ENCODE measurements at regions of chr7 and their contacts with region 1.

Region 1: GRCh38 chr7:114922016-114922651 is at the start of gene MDFIC:
- DNase-seq: peak; percentile 54 to 77
- ATAC-seq: peak; percentile 86 to 97 (median 90)
- H3K4me3 ChIP-seq: peak within 1 kb of the TSS; percentile 43 to 91 (median 86)
- H3K27ac ChIP-seq: peak within 1 kb of the TSS; percentile 79 to 97 (median 90)
- H3K4me1 ChIP-seq: peaks cover 0 to 43% (median 27%) of the 10 kb centered on the region in 9 donors
- H3K27me3 ChIP-seq: no peaks in the 10 kb centered on the region
- CTCF ChIP-seq: peak in 4 of 9 donors; percentile 9 to 36 (median 20)
- total RNA-seq, gene MDFIC: 12.1 to 55.7 (median 34.1) TPM

Region 2: DNA sequence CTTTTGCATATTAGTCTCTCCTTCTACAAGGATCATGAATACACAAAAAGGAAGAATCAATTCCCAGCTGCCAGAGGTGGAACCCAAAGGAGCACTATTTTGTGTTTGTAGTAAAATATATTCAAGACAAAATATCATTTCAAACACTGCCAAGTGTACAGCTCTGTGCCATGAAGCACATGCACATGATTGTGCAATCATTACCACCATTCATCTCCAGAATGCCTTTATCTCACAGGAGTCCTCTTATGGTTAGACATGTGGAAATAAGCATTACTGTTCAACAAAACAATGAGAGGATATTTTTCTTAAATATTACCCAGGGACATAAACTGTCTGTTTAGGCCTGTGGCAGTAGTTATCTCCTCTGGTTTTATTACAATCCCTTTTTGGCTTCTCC is 851.9 kb before region 1 on chr7:
- intact Hi-C with region 1: no loop called
- DNase-seq: no peak
- ATAC-seq: no peak
- H3K4me3 ChIP-seq: no peak overlapping the region
- H3K27ac ChIP-seq: no peak overlapping the region
- H3K4me1 ChIP-seq: no peaks in the 10 kb centered on the region
- H3K27me3 ChIP-seq: peaks cover 0 to 4% (median 0%) of the 10 kb centered on the region in 7 donors
- CTCF ChIP-seq: no peak

Region 3: DNA sequence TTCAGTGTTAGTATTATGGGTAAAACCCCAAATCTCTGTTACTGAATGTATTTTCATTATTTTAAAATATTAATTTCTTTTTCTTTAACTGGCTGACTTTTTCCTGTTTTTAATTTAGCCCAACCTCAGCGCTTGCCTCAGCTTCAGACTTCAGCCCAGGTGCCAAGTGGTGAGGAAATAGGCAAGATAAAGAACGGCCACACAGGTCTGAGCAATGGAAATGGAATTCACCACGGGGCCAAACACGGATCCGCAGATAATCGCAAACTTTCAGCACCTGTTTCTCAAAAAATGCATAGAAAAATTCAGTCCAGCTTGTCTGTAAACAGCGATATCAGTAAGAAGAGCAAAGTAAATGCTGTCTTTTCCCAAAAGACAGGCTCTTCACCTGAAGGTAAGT is 57.3 kb after region 1 on chr7:
- intact Hi-C with region 1: loop called in 6 of 10 experiments (anchors 10 kb)
- DNase-seq: peak; percentile 13 to 66
- ATAC-seq: peak; percentile 78 to 98 (median 92)
- H3K4me3 ChIP-seq: peak overlapping the region in 8 of 10 donors; percentile 8 to 48 (median 36)
- H3K27ac ChIP-seq: peak overlapping the region in 9 of 10 donors; percentile 9 to 86 (median 69)
- H3K4me1 ChIP-seq: peaks cover 0 to 72% (median 56%) of the 10 kb centered on the region in 9 donors
- H3K27me3 ChIP-seq: no peaks in the 10 kb centered on the region
- CTCF ChIP-seq: no peak

Region 4: DNA sequence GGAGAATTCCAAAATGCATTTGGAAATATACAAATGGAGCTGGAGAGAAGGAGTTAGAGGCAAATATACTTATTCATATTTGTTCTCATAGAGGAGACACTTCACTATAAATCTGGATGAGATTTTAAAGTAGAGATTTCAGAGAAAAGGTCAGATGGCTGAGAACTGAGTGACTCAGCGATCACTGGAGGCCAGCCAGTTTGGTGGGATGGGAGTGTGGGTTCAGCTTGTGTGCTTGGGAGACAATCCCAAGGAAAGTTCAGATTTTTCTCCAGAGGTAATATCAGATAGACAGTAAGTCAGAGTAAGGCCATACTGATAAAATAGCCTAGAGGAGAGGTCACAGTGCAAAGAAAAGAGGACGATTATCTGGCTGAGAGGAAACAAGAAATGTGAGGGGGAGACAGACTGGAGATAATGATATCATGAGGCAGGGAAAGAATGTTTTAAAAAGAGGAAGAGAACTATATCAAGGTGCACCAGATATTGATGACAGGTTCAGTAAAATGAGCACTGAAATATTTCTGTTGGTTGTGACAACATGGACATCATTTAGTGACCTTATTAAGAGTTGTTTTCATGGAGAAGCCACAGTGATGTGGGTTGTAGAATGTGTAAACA is 66.7 kb after region 1 on chr7:
- intact Hi-C with region 1: loop called in 5 of 10 experiments (anchors 5 to 10 kb)
- DNase-seq: peak; percentile 54 to 71
- ATAC-seq: peak; percentile 33 to 91 (median 77)
- H3K4me3 ChIP-seq: peak overlapping the region in 1 of 10 donors; percentile 19
- H3K27ac ChIP-seq: peak overlapping the region in 9 of 10 donors; percentile 60 to 83 (median 66)
- H3K4me1 ChIP-seq: peaks cover 8 to 66% (median 50%) of the 10 kb centered on the region in 9 donors
- H3K27me3 ChIP-seq: no peaks in the 10 kb centered on the region
- CTCF ChIP-seq: no peak

Region 5: GRCh38 chr7:115008465-115009114 is 86.5 kb after region 1 on chr7:
- intact Hi-C with region 1: loop called in 4 of 10 experiments (anchors 5 to 10 kb)
- DNase-seq: peak; percentile 71 to 84
- ATAC-seq: peak; percentile 89 to 97 (median 94)
- H3K4me3 ChIP-seq: peak overlapping the region in 1 of 10 donors; percentile 1
- H3K27ac ChIP-seq: peak overlapping the region in 7 of 10 donors; percentile 3 to 63 (median 27)
- H3K4me1 ChIP-seq: peaks cover 0 to 54% (median 35%) of the 10 kb centered on the region in 9 donors
- H3K27me3 ChIP-seq: no peaks in the 10 kb centered on the region
- CTCF ChIP-seq: no peak

Region 6: DNA sequence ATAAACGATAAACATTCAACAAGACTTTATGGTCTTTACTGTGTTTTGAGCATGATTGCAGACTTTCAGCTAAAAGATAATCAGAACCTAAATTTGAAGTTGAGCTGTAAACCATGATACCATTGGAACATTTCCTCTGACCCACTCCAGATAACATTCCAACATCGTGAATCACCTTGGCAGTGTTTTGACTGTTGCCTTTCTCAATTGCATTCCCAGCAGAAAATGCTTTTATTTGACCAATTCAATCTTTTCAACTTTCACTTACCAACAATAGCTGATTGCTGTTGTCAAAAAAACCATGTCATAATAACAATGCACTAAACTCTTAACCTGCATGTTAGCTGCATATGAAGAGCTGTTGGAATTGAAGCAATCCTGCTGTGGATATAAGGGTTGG is 165.3 kb after region 1 on chr7:
- intact Hi-C with region 1: loop called in 2 of 10 experiments (anchors 5 to 10 kb)
- DNase-seq: peak in 1 of 2 donors; percentile 47
- ATAC-seq: peak in 7 of 8 donors; percentile 77 to 93 (median 90)
- H3K4me3 ChIP-seq: no peak overlapping the region
- H3K27ac ChIP-seq: peak overlapping the region in 6 of 10 donors; percentile 9 to 50 (median 26)
- H3K4me1 ChIP-seq: peaks cover 0 to 32% (median 21%) of the 10 kb centered on the region in 9 donors
- H3K27me3 ChIP-seq: no peaks in the 10 kb centered on the region
- CTCF ChIP-seq: no peak

Region 7: GRCh38 chr7:115217373-115217772 is 295.2 kb after region 1 on chr7:
- intact Hi-C with region 1: loop called in 2 of 10 experiments (anchors 10 kb)
- DNase-seq: no peak
- ATAC-seq: no peak
- H3K4me3 ChIP-seq: no peak overlapping the region
- H3K27ac ChIP-seq: no peak overlapping the region
- H3K4me1 ChIP-seq: peaks cover 0 to 7% (median 4%) of the 10 kb centered on the region in 9 donors
- H3K27me3 ChIP-seq: no peaks in the 10 kb centered on the region
- CTCF ChIP-seq: peak in 8 of 9 donors; percentile 16 to 63 (median 49)

Measured in heart right ventricle (tissue), 16 donors.